ENCODE measurements at regions of chr9 and their contacts with region 1.

Region 1: GRCh38 chr9:4832786-4833579 is 40.2 kb downstream of the RCL1 start:
- DNase-seq: peak in 2 of 4 experiments; percentile 53 to 79
- ATAC-seq: peak; percentile 64
- H3K4me3 ChIP-seq: no peak overlapping the region
- H3K27ac ChIP-seq: peak overlapping the region; percentile 92
- H3K4me1 ChIP-seq: peaks cover 9 to 80% of the 10 kb centered on the region in 2 experiments
- H3K27me3 ChIP-seq: no peaks in the 10 kb centered on the region
- CTCF ChIP-seq: no peak
- EP300 ChIP-seq: peak; percentile 74; the same call in 1 of the 2 replicates
- POLR2A ChIP-seq: no peak
- RAD21 ChIP-seq: no peak; a peak in 1 of 4 replicates

Region 2: DNA sequence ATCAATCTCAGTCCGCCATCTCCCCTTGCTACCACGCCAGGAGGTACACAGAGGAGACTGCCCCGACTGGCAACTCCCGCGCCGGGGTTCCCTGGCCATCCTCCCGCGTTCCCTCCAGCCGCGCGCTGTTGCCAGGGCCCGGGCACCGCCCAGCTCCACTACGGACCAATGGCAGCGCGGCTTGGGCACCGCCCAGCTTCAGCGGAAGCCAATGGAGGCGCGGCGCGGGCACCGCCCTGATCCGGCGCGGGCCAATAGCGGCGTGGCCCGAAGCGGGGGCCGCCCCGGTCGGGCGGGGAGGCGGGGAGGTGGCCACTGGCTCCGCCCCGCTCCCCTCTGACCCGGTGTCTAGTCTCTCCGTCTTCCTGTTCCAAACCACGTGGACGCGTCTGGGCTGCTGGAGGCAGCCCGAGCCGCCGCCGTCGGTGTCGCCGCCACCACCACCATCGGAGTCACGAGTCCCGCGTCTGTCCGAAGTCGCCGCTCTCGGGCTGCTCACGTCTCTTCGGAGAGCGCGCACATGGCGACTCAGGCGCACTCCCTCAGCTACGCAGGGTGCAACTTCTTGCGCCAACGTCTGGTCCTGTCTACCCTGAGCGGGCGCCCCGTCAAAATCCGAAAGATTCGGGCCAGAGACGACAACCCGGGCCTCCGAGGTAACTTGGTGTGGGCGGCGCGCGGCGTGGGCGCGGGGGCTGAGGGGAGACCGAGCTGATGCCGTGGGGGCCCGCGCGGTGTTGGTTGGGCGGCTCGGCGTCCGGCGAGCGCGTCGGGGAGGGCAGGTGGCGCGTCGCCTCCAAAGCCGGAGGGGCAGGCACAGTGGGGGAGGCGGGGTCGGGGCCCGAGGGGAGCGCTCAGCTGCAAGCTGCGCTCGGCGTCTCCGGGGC is 40.2 kb before region 1 on chr9 and contains the start of gene RCL1:
- CTCF ChIA-PET with region 1: no interaction called
- POLR2A ChIA-PET with region 1: interaction called, 8 read pairs
- in situ Hi-C with region 1: no loop called
- intact Hi-C with region 1: loop called (anchors 5 kb)
- DNase-seq: peak; percentile 92 to 95 (median 94)
- ATAC-seq: peak; percentile 97
- H3K4me3 ChIP-seq: peak within 1 kb of the TSS; percentile 91
- H3K27ac ChIP-seq: peak within 1 kb of the TSS; percentile 91
- H3K4me1 ChIP-seq: peaks cover 10 to 16% of the 10 kb centered on the region in 2 experiments; a peak in 4 of 5 replicates
- H3K27me3 ChIP-seq: no peaks in the 10 kb centered on the region
- CTCF ChIP-seq: no peak
- EP300 ChIP-seq: no peak
- POLR2A ChIP-seq: peak; percentile 81
- RAD21 ChIP-seq: no peak
- polyA plus RNA-seq, gene RCL1: 36.9 to 46.1 TPM

Region 3: GRCh38 chr9:4822057-4822456 is 10.9 kb before region 1 on chr9:
- CTCF ChIA-PET with region 1: no interaction called
- POLR2A ChIA-PET with region 1: interaction called, 13 read pairs
- in situ Hi-C with region 1: no loop called
- intact Hi-C with region 1: no loop called
- DNase-seq: peak in 1 of 4 experiments; percentile 36
- ATAC-seq: peak; percentile 73
- H3K4me3 ChIP-seq: no peak overlapping the region
- H3K27ac ChIP-seq: peak overlapping the region; percentile 41
- H3K4me1 ChIP-seq: peaks cover 12 to 31% of the 10 kb centered on the region in 2 experiments; a peak in 4 of 5 replicates
- H3K27me3 ChIP-seq: no peaks in the 10 kb centered on the region
- CTCF ChIP-seq: no peak
- EP300 ChIP-seq: no peak
- POLR2A ChIP-seq: no peak
- RAD21 ChIP-seq: no peak

Region 4: GRCh38 chr9:4862506-4863250 is 29.7 kb after region 1 on chr9:
- CTCF ChIA-PET with region 1: no interaction called
- POLR2A ChIA-PET with region 1: interaction called, 4 read pairs
- in situ Hi-C with region 1: no loop called
- intact Hi-C with region 1: loop called (anchors 5 kb)
- DNase-seq: peak; percentile 79 to 93 (median 82)
- ATAC-seq: peak; percentile 80
- H3K4me3 ChIP-seq: no peak overlapping the region
- H3K27ac ChIP-seq: peak overlapping the region; percentile 83
- H3K4me1 ChIP-seq: peaks cover 49 to 81% of the 10 kb centered on the region in 2 experiments
- H3K27me3 ChIP-seq: no peaks in the 10 kb centered on the region
- CTCF ChIP-seq: no peak
- EP300 ChIP-seq: peak; percentile 98
- POLR2A ChIP-seq: no peak
- RAD21 ChIP-seq: peak in 1 of 2 experiments; percentile 17; a peak in 1 of 4 replicates

Measured in K562 (cell line).